Heart right ventricle (tissue), 16 donors: ENCODE measurements at regions of chr5 and their contacts with region 1.

Region 1: DNA sequence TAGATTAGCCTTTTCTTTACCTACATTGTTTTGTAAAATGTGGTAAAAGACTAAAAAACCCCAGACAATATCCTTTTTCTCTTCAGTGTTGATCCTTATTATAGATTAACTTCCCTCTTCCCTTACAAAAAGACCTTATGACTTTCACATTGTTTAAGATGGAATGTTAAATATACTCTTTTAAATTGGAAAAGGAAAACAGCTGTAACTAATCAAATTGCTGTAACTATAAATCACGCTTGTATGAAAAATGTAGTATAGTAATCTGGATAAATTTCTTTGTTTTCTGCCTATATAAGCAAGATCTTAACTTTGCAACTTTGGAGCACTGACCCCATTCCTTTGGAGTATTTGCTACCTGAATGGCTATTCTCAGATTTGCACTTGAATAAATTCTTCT is 383.1 kb downstream of the FAM170A start:
- DNase-seq: no peak
- ATAC-seq: no peak
- H3K4me3 ChIP-seq: no peak overlapping the region
- H3K27ac ChIP-seq: no peak overlapping the region
- H3K4me1 ChIP-seq: peaks cover 0 to 7% (median 0%) of the 10 kb centered on the region in 9 donors
- H3K27me3 ChIP-seq: no peaks in the 10 kb centered on the region
- CTCF ChIP-seq: no peak

Region 2: DNA sequence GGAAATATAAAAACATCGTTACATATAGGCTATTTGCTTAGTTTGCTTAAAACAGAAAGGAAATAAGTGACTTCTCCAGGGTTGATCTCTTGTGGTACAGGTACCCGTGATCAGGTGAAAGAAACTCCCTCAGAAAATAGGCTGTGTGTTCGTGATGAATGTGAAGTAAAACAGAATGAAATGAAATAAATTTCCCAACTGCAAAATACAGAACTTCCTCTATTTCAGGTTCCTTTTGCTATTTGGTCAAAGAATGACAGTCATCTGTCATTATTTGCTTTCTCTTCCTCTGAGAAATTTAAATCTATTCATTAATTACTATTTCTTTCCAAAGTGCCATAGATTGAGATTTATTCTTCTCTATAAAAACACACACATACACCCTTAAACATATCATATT is 25.0 kb after region 1 on chr5:
- intact Hi-C with region 1: loop called in 1 of 10 experiments (anchors 1 kb)
- DNase-seq: no peak
- ATAC-seq: no peak
- H3K4me3 ChIP-seq: no peak overlapping the region
- H3K27ac ChIP-seq: no peak overlapping the region
- H3K4me1 ChIP-seq: no peaks in the 10 kb centered on the region
- H3K27me3 ChIP-seq: no peaks in the 10 kb centered on the region
- CTCF ChIP-seq: no peak

Region 3: DNA sequence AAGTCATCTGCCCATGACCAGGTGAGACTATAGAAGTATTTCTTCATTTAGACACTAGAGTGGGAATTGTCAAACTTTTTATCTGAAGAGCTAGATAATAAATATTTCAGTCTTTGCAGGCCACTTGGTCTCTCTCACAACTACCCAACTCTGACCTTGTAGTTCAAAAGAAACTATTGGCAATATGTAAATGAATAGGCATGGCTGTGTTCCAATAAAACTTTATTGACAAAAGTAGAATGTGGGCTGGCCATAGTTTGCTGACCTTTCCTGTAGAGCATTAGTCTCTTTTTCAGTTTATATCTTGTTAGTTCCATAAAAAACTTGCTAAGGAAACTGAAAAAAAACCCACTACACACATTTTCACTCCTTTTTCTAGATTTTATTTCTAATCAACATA is 987.1 kb after region 1 on chr5:
- intact Hi-C with region 1: no loop called
- DNase-seq: no peak
- ATAC-seq: no peak
- H3K4me3 ChIP-seq: no peak overlapping the region
- H3K27ac ChIP-seq: no peak overlapping the region
- H3K4me1 ChIP-seq: no peaks in the 10 kb centered on the region
- H3K27me3 ChIP-seq: peaks cover 0 to 6% (median 0%) of the 10 kb centered on the region in 7 donors
- CTCF ChIP-seq: no peak